RWPE1 (cell line): ENCODE measurements at regions of chr19 and their contacts with region 1.

Region 1: GRCh38 chr19:12913011-12913561 is 6.0 kb downstream of the SYCE2 start:
- DNase-seq: no peak
- H3K27ac ChIP-seq: no peak overlapping the region
- CTCF ChIP-seq: no peak

Region 2: DNA sequence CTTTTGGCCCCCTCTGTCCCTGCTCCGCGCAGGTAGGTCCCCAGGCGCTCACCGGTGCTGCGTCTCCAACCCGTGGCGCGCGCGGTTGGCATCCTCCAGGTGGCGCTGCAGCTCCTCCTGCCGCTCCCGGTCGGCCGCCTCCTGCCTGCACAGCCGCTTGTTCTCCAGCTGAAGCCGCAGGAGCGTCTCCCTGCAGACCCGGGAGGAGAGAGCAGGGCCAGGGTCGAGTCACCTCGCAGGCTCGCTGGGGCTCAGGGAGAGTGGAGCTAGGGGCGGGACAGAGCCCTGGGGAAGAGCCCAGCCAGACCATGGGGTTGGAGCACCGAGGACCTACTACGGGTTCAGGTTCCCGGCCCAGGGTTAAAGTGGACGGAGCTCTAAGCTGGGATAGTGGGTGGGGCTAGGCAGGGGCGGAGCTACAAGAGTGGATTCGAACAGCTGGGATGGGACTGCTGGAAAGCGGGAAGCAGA is 147.0 kb before region 1 on chr19:
- CTCF ChIA-PET with region 1: no interaction called
- POLR2A ChIA-PET with region 1: no interaction called
- DNase-seq: no peak
- H3K27ac ChIP-seq: peak overlapping the region; percentile 19; the same call in 1 of the 2 replicates
- CTCF ChIP-seq: no peak

Region 3: GRCh38 chr19:12881172-12881808 is 31.8 kb before region 1 on chr19 and contains the start of gene DNASE2:
- CTCF ChIA-PET with region 1: interaction called, 4 read pairs
- POLR2A ChIA-PET with region 1: interaction called, 11 read pairs
- DNase-seq: peak; percentile 98
- H3K27ac ChIP-seq: peak within 1 kb of the TSS; percentile 87
- CTCF ChIP-seq: no peak

Region 4: GRCh38 chr19:12928415-12928814 is 15.3 kb after region 1 on chr19:
- CTCF ChIA-PET with region 1: no interaction called
- POLR2A ChIA-PET with region 1: no interaction called
- DNase-seq: no peak
- H3K27ac ChIP-seq: no peak overlapping the region
- CTCF ChIP-seq: no peak